ENCODE measurements at regions of chr3 and their contacts with region 1.

Region 1: GRCh38 chr3:9439331-9439730 is 41.9 kb downstream of the SETD5 start:
- DNase-seq: no peak
- H3K4me3 ChIP-seq: no peak overlapping the region
- H3K27ac ChIP-seq: no peak overlapping the region
- H3K4me1 ChIP-seq: no peaks in the 10 kb centered on the region
- CTCF ChIP-seq: no peak

Region 2: DNA sequence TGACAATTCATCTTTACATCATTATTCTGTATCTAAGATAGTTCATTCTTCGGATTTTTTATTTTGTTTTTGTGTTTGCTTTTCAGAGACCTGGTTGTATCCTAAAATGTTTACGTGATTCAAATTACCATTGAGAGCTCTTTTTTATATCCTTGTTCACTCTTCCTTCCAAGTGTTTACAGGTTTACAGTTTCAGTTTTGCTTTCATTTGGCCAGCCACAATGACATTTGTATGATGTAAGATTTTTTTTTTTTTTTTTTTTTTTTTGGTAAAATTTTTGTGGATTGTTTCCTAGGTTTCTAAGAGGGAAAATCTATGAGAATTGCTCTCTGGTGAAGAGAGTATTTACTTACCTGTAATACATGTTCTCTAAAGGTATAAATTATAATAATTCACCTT is 13.1 kb after region 1 on chr3:
- CTCF ChIA-PET with region 1: no interaction called
- POLR2A ChIA-PET with region 1: interaction called, 11 read pairs
- intact Hi-C with region 1: no loop called
- DNase-seq: no peak
- H3K4me3 ChIP-seq: no peak overlapping the region
- H3K27ac ChIP-seq: no peak overlapping the region
- H3K4me1 ChIP-seq: no peaks in the 10 kb centered on the region
- CTCF ChIP-seq: no peak